Left cardiac atrium (tissue), 4 donors: ENCODE measurements at regions of chr1 and their contacts with region 1.

Region 1: DNA sequence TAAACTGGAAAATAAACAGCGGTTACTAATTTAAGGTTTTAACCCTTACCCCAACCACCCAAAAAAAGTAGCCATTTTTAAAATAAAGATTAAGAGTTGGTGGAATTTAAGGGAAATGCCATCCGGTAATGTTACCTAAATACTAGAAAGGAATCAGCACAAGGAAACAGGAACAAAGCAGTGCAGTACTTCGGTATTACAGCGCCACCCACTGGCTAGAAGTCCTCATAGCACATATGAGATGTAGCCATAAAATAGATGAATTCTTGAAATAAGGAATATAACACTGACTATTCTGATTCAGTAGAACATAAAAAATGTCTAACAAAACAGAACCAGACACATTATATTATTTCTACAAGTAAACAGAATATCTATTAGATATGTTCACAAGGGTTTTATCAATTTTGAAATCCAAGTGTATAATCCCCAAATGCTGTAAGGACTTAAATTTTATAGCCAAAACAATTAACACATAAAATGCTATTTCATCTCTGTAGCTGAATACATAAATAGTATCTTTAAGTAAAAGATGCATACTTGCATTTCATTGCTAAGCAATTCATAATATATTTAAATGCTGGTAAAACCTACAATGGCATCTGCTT is 58.8 kb downstream of the FRRS1 start:
- DNase-seq: peak; percentile 63
- ATAC-seq: peak; percentile 77 to 80

Region 2: DNA sequence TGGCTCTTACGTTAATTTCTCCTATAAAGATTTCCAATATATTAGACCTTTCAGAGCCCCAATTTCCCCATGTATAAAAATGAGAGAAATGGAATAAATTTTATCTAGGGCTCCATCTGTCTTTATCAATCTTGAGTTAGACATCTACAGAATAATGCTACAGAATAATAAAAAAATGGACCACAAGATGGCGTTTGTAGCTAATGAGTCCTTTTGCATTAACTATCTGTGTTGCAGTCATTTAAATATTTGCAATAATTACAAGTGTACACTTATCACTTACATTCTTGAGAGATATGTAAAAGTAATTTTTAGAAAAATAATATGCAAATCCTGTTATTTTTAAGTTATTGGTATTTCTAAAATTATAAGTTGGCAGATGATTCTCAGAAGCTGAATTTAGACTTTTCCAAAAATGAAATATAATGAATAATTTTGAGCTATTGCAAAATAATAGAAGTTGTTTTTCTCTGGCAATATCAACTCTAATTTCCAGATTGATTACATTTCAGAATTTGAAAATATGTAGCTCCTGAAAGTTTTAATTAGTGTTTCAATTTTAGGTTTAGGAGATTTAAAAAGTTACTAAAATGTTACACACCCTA is 958.4 kb before region 1 on chr1:
- intact Hi-C with region 1: loop called in 1 of 2 experiments (anchors 5 kb)
- DNase-seq: no peak
- ATAC-seq: no peak

Region 3: DNA sequence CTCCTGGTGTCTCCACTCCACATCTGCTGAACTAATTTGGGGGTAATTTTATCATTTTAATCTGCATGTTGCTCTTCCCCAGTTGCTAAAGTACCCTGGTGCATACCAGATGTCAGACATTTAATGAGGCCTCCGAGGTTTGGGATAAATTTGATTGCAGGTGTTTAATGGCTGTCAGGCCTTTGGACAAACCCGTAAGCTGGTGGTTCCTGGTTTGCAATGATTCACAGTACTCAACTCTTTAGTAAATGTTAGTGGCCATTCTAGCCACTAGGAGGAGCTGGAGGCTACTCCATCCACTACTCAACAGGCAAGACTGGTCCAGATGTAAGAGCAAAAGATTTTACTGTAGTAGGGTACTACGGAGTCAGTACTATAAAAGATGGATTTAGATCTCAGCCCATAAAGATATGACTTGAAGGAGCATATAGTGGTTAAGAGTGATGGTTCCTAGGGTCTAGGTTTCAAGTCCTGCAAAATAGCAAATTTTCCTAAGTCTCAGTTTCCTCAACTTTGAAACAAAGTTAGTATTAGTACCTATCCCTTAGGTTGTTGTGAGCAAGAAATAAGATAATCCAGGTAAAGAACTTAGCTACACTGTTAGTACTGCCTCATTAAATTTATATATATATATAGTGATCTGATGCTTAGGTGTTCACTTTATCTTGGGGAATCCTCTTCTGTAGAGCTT is 913.3 kb before region 1 on chr1:
- intact Hi-C with region 1: loop called in 1 of 2 experiments (anchors 10 kb)
- DNase-seq: no peak
- ATAC-seq: peak; percentile 69 to 78

Region 4: DNA sequence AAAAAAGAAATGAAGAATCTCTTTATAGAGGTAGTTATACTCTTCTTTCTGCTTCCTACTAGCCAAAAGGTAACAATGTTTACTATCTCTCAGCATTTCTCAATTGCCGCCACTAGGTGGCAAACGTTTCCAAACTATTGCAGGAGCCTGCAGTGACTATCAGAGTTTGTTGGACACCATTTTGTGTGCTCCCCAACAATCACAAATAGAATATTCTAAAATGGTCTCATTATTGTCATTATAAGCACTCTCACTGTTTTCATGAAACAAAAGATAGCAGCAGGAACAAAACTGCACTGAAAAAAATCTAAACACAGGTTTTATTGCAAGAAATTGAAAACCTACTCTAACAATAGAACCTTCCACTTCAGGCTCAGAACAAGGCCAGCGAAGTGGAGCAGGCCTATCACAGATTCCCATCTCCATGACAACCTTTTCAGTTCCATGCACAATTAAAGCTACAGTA is 527.3 kb before region 1 on chr1:
- intact Hi-C with region 1: loop called (anchors 1 to 5 kb)
- DNase-seq: peak; percentile 75
- ATAC-seq: peak; percentile 94 to 96

Region 5: GRCh38 chr1:99481391-99481996 is 226.1 kb before region 1 on chr1:
- intact Hi-C with region 1: loop called (anchors 5 to 10 kb)
- DNase-seq: peak; percentile 30
- ATAC-seq: peak in 1 of 2 donors; percentile 47

Region 6: GRCh38 chr1:99590578-99591209 is 116.9 kb before region 1 on chr1:
- intact Hi-C with region 1: no loop called
- DNase-seq: peak; percentile 60
- ATAC-seq: peak; percentile 79 to 82